AG04449 (cell line): ENCODE measurements at regions of chr13 and their contacts with region 1.

Region 1: GRCh38 chr13:49679246-49679645 is 12.0 kb downstream of the EBPL start:
- DNase-seq: no peak
- H3K4me3 ChIP-seq: no peak overlapping the region
- CTCF ChIP-seq: peak; percentile 21

Region 2: GRCh38 chr13:49348751-49349150 is 330.5 kb before region 1 on chr13:
- CTCF ChIA-PET with region 1: no interaction called
- POLR2A ChIA-PET with region 1: no interaction called
- DNase-seq: no peak
- H3K4me3 ChIP-seq: no peak overlapping the region
- CTCF ChIP-seq: no peak

Region 3: GRCh38 chr13:49585220-49586157 is 93.8 kb before region 1 on chr13 and contains the start of gene RCBTB1:
- CTCF ChIA-PET with region 1: no interaction called
- POLR2A ChIA-PET with region 1: no interaction called
- DNase-seq: no peak
- H3K4me3 ChIP-seq: peak within 1 kb of the TSS; percentile 85
- CTCF ChIP-seq: no peak

Region 4: GRCh38 chr13:49810567-49811526 is 131.6 kb after region 1 on chr13:
- CTCF ChIA-PET with region 1: no interaction called
- POLR2A ChIA-PET with region 1: no interaction called
- DNase-seq: no peak
- H3K4me3 ChIP-seq: no peak overlapping the region
- CTCF ChIP-seq: no peak

Region 5: GRCh38 chr13:49844181-49844580 is 164.9 kb after region 1 on chr13:
- CTCF ChIA-PET with region 1: interaction called, 20 read pairs
- POLR2A ChIA-PET with region 1: no interaction called
- DNase-seq: no peak
- H3K4me3 ChIP-seq: no peak overlapping the region
- CTCF ChIP-seq: no peak